ENCODE measurements at regions of chr1 and their contacts with region 1.

Region 1: DNA sequence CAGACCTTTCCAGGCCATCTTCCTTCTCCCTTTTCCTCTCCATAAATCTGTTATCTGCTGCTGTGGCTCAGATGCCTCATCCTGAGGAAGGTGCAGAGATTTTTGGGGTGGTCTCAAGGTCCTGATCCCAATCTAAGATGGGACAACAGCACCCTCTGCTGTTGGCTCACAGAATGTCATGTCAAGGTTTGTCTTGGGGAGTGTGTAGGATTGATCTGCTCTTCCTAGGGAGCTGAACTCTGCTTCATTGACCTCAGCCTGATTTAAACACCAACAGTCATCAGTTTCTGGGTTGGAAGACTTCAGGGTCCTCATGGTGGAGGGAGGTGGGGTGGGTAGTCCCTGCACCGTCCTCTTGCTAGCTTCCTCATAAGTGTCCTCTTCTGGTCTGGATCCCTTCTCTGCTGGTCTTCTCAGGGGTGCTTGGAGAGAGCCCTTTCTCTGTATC is 62.8 kb upstream of the LAX1 start:
- DNase-seq: peak; percentile 37
- H3K4me3 ChIP-seq: no peak overlapping the region
- H3K27ac ChIP-seq: no peak overlapping the region
- H3K4me1 ChIP-seq: peaks cover 18% of the 10 kb centered on the region
- H3K27me3 ChIP-seq: no peaks in the 10 kb centered on the region
- CTCF ChIP-seq: peak; percentile 79 to 80

Region 2: DNA sequence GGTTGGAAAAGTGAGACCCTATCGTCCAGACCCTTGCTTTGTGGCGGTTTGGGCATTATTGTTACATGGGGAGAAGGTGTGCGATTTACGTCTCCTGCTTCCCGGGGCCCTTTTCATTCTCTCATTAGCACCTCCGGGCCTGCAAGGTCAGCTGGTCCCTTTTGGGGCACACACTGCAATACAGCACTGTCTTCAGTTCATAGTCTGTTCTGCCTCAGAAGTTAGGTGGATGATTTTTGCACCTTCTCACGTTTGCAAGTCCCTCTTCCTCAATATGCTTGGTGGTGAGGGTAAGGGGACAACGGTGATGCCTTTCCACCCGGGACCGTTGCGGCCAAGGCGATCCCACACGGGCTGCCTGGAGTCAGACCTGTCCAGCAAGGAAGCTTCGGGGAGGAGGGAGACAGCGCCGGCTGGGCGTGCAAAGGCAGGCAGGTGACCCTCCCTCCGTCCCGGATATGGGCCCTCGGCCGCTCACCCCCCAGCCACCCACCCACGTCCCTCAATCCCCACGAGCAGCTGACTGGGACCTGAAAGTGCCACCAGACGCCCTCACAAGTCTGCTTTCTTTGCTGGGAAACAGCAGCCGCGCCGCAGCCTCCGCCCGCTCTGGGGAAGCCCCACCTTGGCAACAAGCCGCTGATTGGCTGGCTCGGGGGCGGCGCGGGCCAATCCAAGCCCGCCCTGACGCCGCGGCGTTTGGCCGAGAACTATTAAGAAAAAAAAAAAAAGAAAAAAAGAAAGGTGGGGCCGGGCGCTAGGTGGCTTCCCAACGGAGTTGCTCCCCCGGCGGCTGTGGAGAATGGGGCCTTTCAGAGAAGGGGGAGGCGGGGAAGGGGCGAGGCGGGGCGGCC is 375.1 kb before region 1 on chr1:
- CTCF ChIA-PET with region 1: no interaction called
- dilution Hi-C with region 1: no loop called
- in situ Hi-C with region 1: loop called in 1 of 2 experiments (anchors 25 kb)
- intact Hi-C with region 1: no loop called
- DNase-seq: peak; percentile 89
- H3K4me3 ChIP-seq: peak overlapping the region; percentile 47 to 59 (median 51)
- H3K27ac ChIP-seq: peak overlapping the region; percentile 37
- H3K4me1 ChIP-seq: peaks cover 14% of the 10 kb centered on the region
- H3K27me3 ChIP-seq: no peaks in the 10 kb centered on the region
- CTCF ChIP-seq: no peak

Region 3: GRCh38 chr1:203368624-203369451 is 333.3 kb before region 1 on chr1:
- CTCF ChIA-PET with region 1: no interaction called
- dilution Hi-C with region 1: no loop called
- in situ Hi-C with region 1: loop called in 1 of 2 experiments (anchors 10 kb)
- intact Hi-C with region 1: loop called (anchors 1 kb)
- DNase-seq: peak; percentile 81
- H3K4me3 ChIP-seq: no peak overlapping the region
- H3K27ac ChIP-seq: no peak overlapping the region
- H3K4me1 ChIP-seq: peaks cover 14% of the 10 kb centered on the region
- H3K27me3 ChIP-seq: no peaks in the 10 kb centered on the region
- CTCF ChIP-seq: peak; percentile 53 to 66

Region 4: DNA sequence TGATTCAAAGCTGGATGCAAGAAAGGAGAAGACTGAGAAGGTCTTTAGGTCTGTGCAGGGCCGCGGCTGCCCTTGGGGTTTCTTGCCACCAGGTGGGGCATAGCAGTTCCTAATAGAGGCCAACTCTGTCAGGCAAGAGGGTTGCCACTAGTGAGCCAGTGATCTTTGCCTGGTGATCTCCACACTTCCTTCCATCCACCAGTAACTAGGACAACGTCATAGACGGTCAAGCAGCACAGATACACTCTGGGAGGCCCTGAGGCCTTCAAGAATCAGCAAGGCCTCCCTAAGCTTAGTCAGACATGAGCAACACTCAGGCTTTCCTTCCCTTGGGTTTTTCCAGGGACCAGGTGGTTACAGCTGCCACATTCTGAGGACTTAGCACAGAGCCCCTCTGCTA is 108.4 kb before region 1 on chr1:
- CTCF ChIA-PET with region 1: interaction called, 25 read pairs
- dilution Hi-C with region 1: no loop called
- in situ Hi-C with region 1: no loop called
- intact Hi-C with region 1: loop called (anchors 1 kb)
- DNase-seq: peak; percentile 62
- H3K4me3 ChIP-seq: no peak overlapping the region
- H3K27ac ChIP-seq: no peak overlapping the region
- H3K4me1 ChIP-seq: peaks cover 3% of the 10 kb centered on the region
- H3K27me3 ChIP-seq: no peaks in the 10 kb centered on the region
- CTCF ChIP-seq: peak; percentile 11 to 39

Region 5: GRCh38 chr1:203673550-203674427 is 28.4 kb before region 1 on chr1:
- CTCF ChIA-PET with region 1: interaction called, 7 read pairs
- dilution Hi-C with region 1: no loop called
- in situ Hi-C with region 1: no loop called
- intact Hi-C with region 1: loop called (anchors 1 kb)
- DNase-seq: peak; percentile 96
- H3K4me3 ChIP-seq: no peak overlapping the region
- H3K27ac ChIP-seq: peak overlapping the region; percentile 86
- H3K4me1 ChIP-seq: peaks cover 37% of the 10 kb centered on the region
- H3K27me3 ChIP-seq: no peaks in the 10 kb centered on the region
- CTCF ChIP-seq: peak in 1 of 2 donors; percentile 49

Region 6: DNA sequence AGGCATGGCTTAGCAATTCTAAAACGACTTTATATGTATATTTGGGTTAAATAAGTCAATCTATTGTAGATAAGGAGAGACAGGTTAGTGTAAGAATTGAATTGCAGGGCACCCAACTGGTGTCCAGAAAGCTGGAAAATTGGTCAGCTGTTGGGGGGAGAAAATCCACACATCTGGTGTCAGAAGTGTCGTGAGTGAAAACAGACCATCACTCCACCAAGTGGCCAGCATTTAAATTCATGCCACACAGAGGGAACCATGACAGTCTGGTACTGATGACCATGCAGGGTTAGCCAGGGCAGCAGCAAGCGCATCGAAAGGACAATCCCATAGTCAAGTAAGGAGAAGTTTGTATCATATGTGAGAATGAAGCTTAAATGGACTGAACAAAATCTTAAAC is 74.5 kb after region 1 on chr1:
- CTCF ChIA-PET with region 1: no interaction called
- dilution Hi-C with region 1: no loop called
- in situ Hi-C with region 1: no loop called
- intact Hi-C with region 1: loop called (anchors 1 kb)
- DNase-seq: no peak
- H3K4me3 ChIP-seq: no peak overlapping the region
- H3K27ac ChIP-seq: no peak overlapping the region
- H3K4me1 ChIP-seq: no peaks in the 10 kb centered on the region
- H3K27me3 ChIP-seq: no peaks in the 10 kb centered on the region
- CTCF ChIP-seq: peak; percentile 4 to 48

Region 7: GRCh38 chr1:204018463-204018862 is 316.3 kb after region 1 on chr1:
- CTCF ChIA-PET with region 1: no interaction called
- dilution Hi-C with region 1: no loop called
- in situ Hi-C with region 1: no loop called
- intact Hi-C with region 1: no loop called
- DNase-seq: no peak
- H3K4me3 ChIP-seq: no peak overlapping the region
- H3K27ac ChIP-seq: no peak overlapping the region
- H3K4me1 ChIP-seq: no peaks in the 10 kb centered on the region
- H3K27me3 ChIP-seq: no peaks in the 10 kb centered on the region
- CTCF ChIP-seq: no peak

Measured in mammary epithelial cell (primary cell).